ENCODE measurements at regions of chr12 and their contacts with region 1.

Region 1: DNA sequence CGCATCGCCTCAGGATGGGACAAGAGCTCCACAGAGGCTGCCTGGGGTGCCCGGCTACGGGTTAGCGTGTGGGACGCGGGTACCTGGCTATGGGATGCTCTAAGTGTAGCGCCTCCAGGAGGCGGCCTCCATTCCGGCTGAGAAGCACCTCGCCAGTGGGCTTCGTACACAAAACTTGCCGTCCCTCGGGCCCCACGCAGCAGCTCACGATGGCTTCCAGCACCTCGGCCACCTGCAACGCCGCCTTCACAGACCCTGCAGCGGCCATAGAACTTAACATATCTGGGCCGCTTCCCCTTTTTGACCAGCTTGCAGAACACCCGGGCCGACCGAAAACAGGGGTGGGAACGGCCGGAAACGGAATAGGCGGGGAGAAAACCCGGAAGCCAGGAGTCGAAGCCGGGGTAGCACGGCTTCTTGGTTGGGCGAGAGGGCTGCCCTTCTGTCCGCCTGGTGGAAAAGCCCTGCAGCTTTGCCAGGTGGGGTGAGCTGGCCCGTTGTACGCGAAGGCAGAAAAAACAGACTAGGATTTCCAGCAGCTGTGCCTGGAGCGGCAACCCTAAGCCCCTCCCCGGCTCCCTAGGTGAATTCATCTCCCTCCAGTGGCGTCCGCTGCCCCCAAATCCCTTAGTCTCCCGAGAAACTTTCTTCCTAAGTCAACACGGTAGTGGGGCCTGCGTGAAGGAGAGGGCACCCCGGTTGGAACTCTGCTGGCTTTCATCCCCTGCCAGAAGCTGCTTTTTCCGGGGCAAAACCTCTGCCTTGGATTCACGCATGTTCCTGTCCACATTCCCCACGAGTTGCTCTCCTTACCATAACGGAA is at the start of gene BBS10:
- DNase-seq: peak; percentile 89
- H3K4me3 ChIP-seq: peak within 1 kb of the TSS; percentile 59 to 69
- H3K27ac ChIP-seq: peak within 1 kb of the TSS; percentile 80 to 83
- H3K4me1 ChIP-seq: peaks cover 5% of the 10 kb centered on the region
- H3K27me3 ChIP-seq: no peaks in the 10 kb centered on the region
- CTCF ChIP-seq: peak in 3 of 4 experiments; percentile 34 to 51 (median 38)
- POLR2A ChIP-seq: no peak
- total RNA-seq, gene BBS10: 11.6 to 11.9 TPM

Region 2: GRCh38 chr12:75526655-75527511 is 821.4 kb before region 1 on chr12:
- intact Hi-C with region 1: loop called (anchors 5 kb)
- DNase-seq: no peak
- H3K4me3 ChIP-seq: no peak overlapping the region
- H3K27ac ChIP-seq: no peak overlapping the region
- H3K4me1 ChIP-seq: no peaks in the 10 kb centered on the region
- H3K27me3 ChIP-seq: no peaks in the 10 kb centered on the region
- CTCF ChIP-seq: peak; percentile 53 to 75 (median 64)
- POLR2A ChIP-seq: no peak

Region 3: GRCh38 chr12:76031537-76032073 is 316.7 kb before region 1 on chr12 and contains the start of gene PHLDA1:
- intact Hi-C with region 1: loop called (anchors 2 kb)
- DNase-seq: peak; percentile 88
- H3K4me3 ChIP-seq: peak within 1 kb of the TSS; percentile 47 to 69
- H3K27ac ChIP-seq: peak within 1 kb of the TSS; percentile 85 to 92
- H3K4me1 ChIP-seq: no peaks in the 10 kb centered on the region
- H3K27me3 ChIP-seq: no peaks in the 10 kb centered on the region
- CTCF ChIP-seq: peak in 3 of 4 experiments; percentile 18 to 80 (median 78)
- POLR2A ChIP-seq: peak; percentile 81
- total RNA-seq, gene PHLDA1: 8.8 to 11.8 TPM

Region 4: GRCh38 chr12:76173756-76174155 is 174.5 kb before region 1 on chr12:
- intact Hi-C with region 1: no loop called
- DNase-seq: no peak
- H3K4me3 ChIP-seq: no peak overlapping the region
- H3K27ac ChIP-seq: no peak overlapping the region
- H3K4me1 ChIP-seq: no peaks in the 10 kb centered on the region
- H3K27me3 ChIP-seq: no peaks in the 10 kb centered on the region
- CTCF ChIP-seq: no peak
- POLR2A ChIP-seq: no peak

Region 5: DNA sequence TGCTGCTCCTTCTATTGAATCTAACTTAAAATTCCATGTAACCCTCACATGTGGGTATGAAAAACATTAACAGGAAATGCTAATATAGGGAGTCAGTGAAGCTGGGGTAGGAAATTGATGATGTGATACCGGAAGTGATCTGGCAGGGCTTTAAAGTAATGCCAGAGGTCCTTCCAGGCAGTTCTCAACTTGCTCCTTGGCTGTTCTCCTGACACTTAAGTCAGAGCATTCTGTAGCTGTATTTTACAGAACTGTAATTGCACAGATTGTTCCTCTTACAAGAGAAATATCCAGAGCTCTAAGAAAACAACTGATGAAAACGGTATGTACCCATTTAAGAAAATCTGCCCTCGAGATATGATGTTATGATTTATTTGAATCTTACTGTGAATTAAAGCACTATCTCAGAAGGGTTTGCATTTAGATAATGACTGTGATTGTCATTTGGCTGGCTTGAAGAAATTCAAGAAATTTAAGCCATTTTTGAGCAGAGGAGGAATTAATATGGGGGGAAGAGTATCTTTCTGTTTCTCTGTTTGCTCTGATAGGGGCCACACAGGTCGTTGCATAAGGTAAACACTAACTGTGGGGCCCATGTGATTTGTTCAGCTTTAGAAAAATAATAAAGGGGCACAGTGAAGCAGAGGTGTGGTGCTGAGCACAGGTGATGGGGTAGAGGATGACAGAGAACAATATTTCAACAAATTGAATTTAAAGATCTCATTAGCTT is 88.5 kb before region 1 on chr12:
- intact Hi-C with region 1: loop called (anchors 5 kb)
- DNase-seq: peak; percentile 34
- H3K4me3 ChIP-seq: no peak overlapping the region
- H3K27ac ChIP-seq: peak overlapping the region; percentile 65 to 72
- H3K4me1 ChIP-seq: no peaks in the 10 kb centered on the region
- H3K27me3 ChIP-seq: no peaks in the 10 kb centered on the region
- CTCF ChIP-seq: no peak
- POLR2A ChIP-seq: no peak

Region 6: GRCh38 chr12:76559400-76560085 is 211.3 kb after region 1 on chr12 and contains the start of gene OSBPL8:
- intact Hi-C with region 1: loop called (anchors 2 kb)
- DNase-seq: peak; percentile 95
- H3K4me3 ChIP-seq: peak within 1 kb of the TSS; percentile 75 to 89
- H3K27ac ChIP-seq: peak within 1 kb of the TSS; percentile 83 to 94
- H3K4me1 ChIP-seq: no peaks in the 10 kb centered on the region
- H3K27me3 ChIP-seq: no peaks in the 10 kb centered on the region
- CTCF ChIP-seq: peak in 1 of 4 experiments; percentile 43
- POLR2A ChIP-seq: peak; percentile 84
- total RNA-seq, gene OSBPL8: 50.6 to 54.2 TPM